Activated naive CD4-positive, alpha-beta T cell treated with anti-CD3 and anti-CD28 coated beads for 36 hours (primary cell): ENCODE measurements at regions of chr1 and their contacts with region 1.

Region 1: DNA sequence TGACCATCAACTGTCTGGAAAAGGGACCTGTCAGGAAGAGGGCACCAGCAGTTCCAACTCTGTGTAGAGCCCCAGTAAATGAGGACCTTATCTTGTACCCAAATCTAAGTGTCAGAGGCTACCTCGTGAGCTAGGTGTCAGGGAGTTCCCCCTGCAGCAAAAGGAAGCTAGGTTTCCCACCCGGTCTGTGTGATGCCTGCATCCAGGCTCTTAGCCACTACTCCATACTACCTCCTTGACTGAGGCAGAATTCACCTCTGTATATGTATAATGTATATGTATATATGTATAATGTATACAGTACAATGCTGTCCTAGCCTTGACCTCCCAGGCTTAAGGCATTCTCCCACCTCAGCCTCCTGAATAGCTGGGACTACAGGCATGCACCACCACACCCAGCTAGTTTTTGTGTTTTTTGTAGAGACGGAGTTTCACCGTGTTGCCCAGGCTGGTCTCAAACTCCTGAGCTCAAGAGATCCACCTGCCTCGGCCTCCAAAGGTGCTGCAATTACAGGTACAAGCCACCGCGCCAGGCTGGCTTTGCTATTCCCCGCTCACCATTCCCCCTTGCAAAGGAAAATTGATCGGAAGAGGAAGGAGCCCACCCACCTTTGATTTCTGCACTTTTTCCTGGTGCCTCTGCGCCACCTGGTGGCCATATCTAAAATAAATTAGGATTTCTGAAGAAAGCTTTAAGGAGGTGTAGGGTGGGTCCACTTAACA is 15.7 kb upstream of the LUZP1 start:
- DNase-seq: peak; percentile 25
- H3K4me3 Mint-ChIP-seq: peak overlapping the region; percentile 47
- H3K27ac Mint-ChIP-seq: no peak overlapping the region
- H3K4me1 Mint-ChIP-seq: peaks cover 3% of the 10 kb centered on the region
- H3K27me3 Mint-ChIP-seq: no peaks in the 10 kb centered on the region

Region 2: GRCh38 chr1:23081376-23081775 is 103.0 kb before region 1 on chr1:
- CTCF ChIA-PET with region 1: interaction called, 19 read pairs
- intact Hi-C with region 1: no loop called
- DNase-seq: no peak
- H3K4me3 Mint-ChIP-seq: no peak overlapping the region
- H3K27ac Mint-ChIP-seq: no peak overlapping the region
- H3K4me1 Mint-ChIP-seq: no peaks in the 10 kb centered on the region
- H3K27me3 Mint-ChIP-seq: no peaks in the 10 kb centered on the region

Region 3: GRCh38 chr1:23098463-23099170 is 85.8 kb before region 1 on chr1:
- CTCF ChIA-PET with region 1: interaction called, 404 read pairs
- intact Hi-C with region 1: loop called (anchors 1 kb)
- DNase-seq: peak; percentile 76
- H3K4me3 Mint-ChIP-seq: no peak overlapping the region
- H3K27ac Mint-ChIP-seq: no peak overlapping the region
- H3K4me1 Mint-ChIP-seq: peaks cover 43% of the 10 kb centered on the region
- H3K27me3 Mint-ChIP-seq: no peaks in the 10 kb centered on the region

Region 4: DNA sequence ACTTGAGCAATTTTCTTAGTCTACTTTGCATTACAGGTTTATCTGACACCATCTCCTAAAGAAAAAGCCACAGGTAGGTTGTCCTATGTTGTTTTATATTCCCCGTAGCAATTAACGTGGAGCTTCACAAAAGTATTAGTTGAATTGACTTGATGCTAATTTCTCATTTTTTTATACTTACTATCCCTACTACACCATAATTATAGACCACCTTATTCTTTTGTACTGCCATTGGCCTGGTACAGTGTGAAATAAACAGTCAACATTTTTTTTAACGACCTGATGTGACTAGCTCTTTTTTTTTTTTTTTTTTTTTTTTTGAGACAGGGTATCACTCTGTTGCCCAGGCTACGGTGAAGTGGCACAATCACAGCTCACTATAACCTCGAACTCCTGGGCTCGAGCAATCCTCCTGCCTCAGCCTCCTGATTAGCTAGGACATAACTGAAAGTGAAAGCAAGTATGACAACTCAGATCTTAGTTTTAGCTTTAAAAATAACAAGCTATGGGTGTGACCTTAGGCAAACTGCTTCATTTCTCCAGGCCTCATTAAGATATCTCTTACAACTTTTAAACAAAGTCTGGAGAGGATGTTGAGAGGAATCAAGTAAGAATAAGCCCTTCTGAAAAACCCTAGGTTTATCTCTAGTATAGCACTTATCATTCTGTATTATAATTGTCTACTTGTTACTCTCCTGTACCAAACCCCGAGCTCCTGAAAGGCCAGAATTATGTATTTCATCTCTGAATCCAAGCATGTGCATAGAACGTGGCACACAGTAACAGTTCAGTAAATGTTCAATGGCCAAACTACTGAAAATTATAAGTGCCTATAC is 65.2 kb before region 1 on chr1:
- CTCF ChIA-PET with region 1: interaction called, 25 read pairs
- intact Hi-C with region 1: no loop called
- DNase-seq: peak; percentile 64
- H3K4me3 Mint-ChIP-seq: peak overlapping the region; percentile 4
- H3K27ac Mint-ChIP-seq: peak overlapping the region; percentile 21
- H3K4me1 Mint-ChIP-seq: peaks cover 52% of the 10 kb centered on the region
- H3K27me3 Mint-ChIP-seq: no peaks in the 10 kb centered on the region

Region 5: DNA sequence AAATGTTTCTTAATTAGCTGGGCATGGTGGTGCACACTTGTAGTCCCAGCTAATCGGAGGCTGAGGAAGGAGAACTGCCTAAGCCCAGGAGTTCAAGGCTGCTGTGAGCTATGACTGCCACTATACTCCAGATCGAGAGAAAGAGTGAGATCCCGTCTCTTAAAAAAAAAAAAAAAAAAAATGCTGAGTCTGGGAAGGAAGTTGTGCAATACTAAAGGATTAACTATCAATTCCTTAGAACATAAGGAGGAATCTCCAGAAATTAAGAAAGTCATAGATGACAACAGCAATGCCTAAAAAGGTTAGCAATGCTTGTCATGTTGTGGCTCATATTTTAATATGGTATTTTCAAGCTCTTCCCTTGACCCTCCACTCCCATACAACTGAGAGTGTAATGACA is 21.0 kb before region 1 on chr1:
- CTCF ChIA-PET with region 1: interaction called, 23 read pairs
- intact Hi-C with region 1: no loop called
- DNase-seq: no peak
- H3K4me3 Mint-ChIP-seq: no peak overlapping the region
- H3K27ac Mint-ChIP-seq: no peak overlapping the region
- H3K4me1 Mint-ChIP-seq: peaks cover 22% of the 10 kb centered on the region
- H3K27me3 Mint-ChIP-seq: no peaks in the 10 kb centered on the region

Region 6: DNA sequence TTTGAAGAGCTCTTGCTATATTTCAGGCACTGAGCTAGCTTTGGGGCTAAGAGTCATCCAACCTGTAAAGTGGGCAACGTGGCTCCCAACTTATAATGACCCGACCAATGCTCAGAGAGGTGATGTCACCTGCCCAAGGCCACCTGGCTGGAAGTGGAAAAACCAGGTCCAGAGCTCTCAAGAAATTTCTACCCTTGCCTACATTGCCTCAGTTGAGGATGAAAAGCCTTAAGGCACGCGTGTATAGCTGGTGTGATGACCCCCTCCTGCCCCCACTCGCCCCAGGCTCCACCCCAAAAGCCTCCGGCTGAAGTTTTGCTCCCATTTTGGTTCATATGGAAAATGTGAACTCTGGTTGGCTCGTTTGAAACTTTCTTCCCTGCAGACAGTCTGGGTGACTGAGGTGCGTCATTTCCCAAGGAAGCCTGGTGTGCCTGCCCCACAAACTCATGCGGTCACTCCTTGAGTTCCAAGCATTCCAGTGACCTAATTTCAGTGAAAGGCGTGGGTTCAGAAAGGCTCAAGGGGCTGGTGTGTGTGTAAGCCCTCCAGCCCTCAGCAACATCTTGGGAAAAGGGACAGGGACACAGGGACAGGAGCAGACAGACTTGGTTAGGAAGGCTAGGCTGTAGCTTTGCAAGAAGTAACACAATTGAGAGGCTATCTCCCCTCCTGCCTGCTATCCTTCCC is 12.4 kb after region 1 on chr1:
- CTCF ChIA-PET with region 1: interaction called, 37 read pairs
- intact Hi-C with region 1: no loop called
- DNase-seq: no peak
- H3K4me3 Mint-ChIP-seq: no peak overlapping the region
- H3K27ac Mint-ChIP-seq: no peak overlapping the region
- H3K4me1 Mint-ChIP-seq: no peaks in the 10 kb centered on the region
- H3K27me3 Mint-ChIP-seq: peaks cover 4% of the 10 kb centered on the region

Region 7: DNA sequence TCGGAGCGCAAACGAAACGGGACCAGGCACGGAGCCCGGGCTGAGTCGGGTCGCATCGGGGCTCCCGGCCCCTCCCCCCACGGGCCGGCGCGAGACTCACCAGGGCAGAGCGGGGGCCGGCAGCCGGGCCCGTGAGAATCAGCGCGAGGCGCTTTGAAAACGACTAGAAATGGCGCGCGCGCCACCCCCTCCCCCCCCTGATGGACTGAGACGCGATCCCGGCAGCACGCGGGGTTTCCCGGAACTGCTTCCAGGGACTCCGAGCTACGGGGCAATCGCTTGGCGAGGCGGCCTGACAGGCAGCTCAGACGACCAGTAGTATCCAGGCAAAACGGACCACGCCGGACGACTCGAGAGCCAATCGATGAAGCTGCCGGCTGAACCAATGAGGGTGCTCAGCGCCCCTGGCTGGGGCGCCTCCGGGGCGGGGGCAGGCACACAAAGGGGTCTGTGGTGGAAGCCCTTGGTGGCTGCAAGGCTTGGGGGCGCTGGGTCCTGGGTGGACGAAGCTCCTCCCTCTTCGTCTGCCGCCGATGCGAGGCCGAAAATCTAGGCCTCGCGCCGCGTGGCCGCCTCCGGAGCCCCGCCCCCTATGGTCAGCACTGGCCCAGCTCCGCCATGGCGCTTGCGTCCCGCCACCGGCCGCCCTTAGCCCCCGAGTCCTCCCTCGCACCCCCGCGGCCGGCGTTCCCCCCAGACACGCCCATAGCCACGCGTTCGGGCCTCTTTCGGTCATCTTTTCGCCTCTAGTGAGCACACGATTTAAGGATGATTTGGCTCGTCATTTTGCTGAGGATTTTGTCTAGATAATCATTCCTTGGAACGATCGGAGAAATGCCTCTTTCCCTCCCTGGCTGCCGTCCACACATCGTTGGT is 160.0 kb after region 1 on chr1 and contains the start of gene HNRNPR:
- CTCF ChIA-PET with region 1: no interaction called
- intact Hi-C with region 1: no loop called
- DNase-seq: peak; percentile 100
- H3K4me3 Mint-ChIP-seq: peak within 1 kb of the TSS; percentile 83
- H3K27ac Mint-ChIP-seq: peak within 1 kb of the TSS; percentile 93
- H3K4me1 Mint-ChIP-seq: peaks cover 32% of the 10 kb centered on the region
- H3K27me3 Mint-ChIP-seq: no peaks in the 10 kb centered on the region
- total RNA-seq, gene HNRNPR: 203 to 208 TPM

Region 8: DNA sequence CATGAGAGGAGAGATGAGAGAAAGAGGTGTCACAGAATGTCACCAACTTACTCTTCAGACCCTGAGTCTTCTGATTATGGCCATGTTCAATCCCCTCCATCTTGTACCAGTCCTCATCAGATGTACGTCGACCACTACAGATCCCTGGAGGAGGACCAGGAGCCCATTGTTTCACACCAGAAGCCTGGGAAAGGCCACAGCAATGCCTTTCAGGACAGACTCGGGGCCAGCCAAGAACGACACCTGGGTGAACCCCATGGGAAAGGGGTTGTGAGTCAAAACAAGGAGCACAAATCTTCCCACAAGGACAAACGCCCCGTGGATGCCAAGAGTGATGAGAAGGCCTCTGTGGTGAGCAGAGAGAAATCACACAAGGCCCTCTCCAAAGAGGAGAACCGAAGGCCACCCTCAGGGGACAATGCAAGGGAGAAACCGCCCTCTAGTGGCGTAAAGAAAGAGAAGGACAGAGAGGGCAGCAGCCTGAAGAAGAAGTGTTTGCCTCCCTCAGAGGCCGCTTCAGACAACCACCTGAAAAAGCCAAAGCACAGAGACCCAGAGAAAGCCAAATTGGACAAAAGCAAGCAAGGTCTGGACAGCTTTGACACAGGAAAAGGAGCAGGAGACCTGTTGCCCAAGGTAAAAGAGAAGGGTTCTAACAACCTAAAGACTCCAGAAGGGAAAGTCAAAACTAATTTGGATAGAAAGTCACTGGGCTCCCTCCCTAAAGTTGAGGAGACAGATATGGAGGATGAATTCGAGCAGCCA is 566.9 kb after region 1 on chr1:
- CTCF ChIA-PET with region 1: no interaction called
- intact Hi-C with region 1: no loop called
- DNase-seq: peak; percentile 60
- H3K4me3 Mint-ChIP-seq: no peak overlapping the region
- H3K27ac Mint-ChIP-seq: no peak overlapping the region
- H3K4me1 Mint-ChIP-seq: peaks cover 28% of the 10 kb centered on the region
- H3K27me3 Mint-ChIP-seq: no peaks in the 10 kb centered on the region